ENCODE measurements at regions of chr15 and their contacts with region 1.

Region 1: DNA sequence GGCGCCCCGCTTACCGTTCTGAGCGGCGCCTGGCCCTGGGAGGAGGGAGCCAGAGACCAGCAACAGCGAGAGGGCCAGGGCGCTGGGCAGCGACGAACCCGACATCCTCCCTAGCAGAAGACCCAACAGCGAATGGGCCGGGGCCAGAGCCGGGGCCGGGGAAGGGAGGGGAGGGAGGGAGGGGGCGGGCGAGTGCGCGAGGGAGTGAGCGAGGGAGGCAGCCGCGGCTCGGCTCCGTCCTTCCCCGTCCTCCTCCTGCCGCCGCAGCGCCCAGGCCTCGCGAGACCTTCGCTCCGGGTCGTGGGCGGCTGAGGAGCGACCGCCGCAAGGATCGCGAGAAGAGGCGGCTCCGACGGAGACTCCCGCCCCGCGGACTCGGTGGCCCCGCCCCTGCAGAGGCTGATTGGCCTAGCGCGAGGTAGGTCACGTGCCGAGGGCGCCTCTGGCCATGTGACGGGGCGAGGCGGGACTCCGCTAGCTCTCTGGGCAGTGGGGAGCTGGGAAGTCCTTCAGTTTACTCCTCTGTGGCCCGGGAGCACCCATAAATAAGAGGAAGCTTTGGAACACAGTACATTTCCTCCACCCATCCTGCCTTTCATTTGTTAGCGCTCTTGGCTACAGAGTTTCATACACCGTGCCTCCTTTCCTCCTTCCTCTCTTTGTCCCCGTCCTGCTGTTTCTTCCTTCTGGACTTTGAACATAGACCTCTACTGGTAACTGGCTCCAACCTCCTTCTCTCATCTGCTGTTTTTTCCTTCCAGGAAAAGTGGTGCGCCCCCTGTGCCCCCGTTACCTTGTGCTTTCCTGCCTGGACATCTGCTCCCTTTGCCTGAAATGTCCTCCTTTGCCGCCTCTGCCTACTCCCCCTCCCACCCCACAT is at the start of gene NPTN:
- DNase-seq: peak; percentile 99
- H3K4me3 ChIP-seq: peak within 1 kb of the TSS; percentile 33 to 99 (median 67)
- H3K27ac ChIP-seq: peak within 1 kb of the TSS; percentile 89
- H3K4me1 ChIP-seq: peaks cover 31% of the 10 kb centered on the region
- H3K27me3 ChIP-seq: peaks cover 0 to 7% of the 10 kb centered on the region in 2 experiments
- CTCF ChIP-seq: no peak
- POLR2A ChIP-seq: peak; percentile 92
- total RNA-seq, gene NPTN: 71.5 and 77.4 TPM in 2 replicates

Region 2: DNA sequence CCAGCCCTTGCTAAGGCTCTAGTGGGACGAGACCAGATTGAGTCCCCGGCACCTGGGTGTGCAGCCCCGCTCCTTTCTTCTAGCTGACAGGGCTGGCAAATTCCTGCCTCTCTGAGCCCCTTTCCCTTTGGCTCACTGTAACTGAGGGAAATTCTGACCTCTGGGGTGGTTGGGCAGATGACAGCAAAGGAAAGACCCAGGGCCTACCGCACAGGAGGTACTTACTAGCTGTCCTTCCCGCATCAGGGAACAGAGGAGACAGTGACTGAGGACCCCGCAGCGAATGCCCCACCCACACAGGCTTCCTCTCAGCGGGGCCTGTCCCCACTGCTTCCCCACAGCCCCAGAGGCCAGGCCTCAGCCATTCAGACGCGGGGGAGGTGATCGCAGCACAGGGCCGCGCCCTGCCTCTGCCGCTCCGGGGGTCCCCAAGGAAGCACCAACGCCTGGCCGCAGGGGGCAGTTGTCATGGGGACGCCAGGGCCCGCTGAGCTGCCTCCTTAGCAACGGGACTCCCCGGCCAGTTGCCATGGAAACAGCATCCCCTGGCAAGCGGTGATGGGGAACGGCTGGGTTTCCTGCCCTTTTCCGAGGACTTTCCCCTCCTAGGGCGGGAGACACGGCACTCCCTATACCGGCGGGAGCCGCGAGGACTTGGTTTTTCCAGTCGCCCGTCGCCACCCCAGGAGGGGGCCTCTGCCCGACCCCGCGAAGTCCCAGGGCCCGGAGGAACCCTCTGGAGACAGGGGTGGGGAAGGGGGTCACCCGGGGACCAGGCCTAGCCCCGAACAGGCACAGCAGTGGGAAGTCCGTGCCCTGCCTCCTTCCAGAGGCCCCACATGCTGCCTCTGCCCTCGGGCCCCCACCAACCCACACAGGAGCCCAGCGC is 314.6 kb before region 1 on chr15:
- CTCF ChIA-PET with region 1: no interaction called
- POLR2A ChIA-PET with region 1: no interaction called
- dilution Hi-C with region 1: no loop called
- intact Hi-C with region 1: no loop called
- DNase-seq: no peak
- H3K4me3 ChIP-seq: no peak overlapping the region
- H3K27ac ChIP-seq: no peak overlapping the region
- H3K4me1 ChIP-seq: no peaks in the 10 kb centered on the region
- H3K27me3 ChIP-seq: peaks cover 0 to 2% of the 10 kb centered on the region in 2 experiments
- CTCF ChIP-seq: no peak
- POLR2A ChIP-seq: no peak

Region 3: GRCh38 chr15:73560501-73561117 is 72.7 kb before region 1 on chr15:
- CTCF ChIA-PET with region 1: interaction called, 294 read pairs
- POLR2A ChIA-PET with region 1: interaction called, 4 read pairs
- dilution Hi-C with region 1: no loop called
- intact Hi-C with region 1: loop called (anchors 1 kb)
- DNase-seq: peak; percentile 80
- H3K4me3 ChIP-seq: no peak overlapping the region
- H3K27ac ChIP-seq: no peak overlapping the region
- H3K4me1 ChIP-seq: peaks cover 10% of the 10 kb centered on the region
- H3K27me3 ChIP-seq: no peaks in the 10 kb centered on the region
- CTCF ChIP-seq: peak; percentile 10 to 36
- POLR2A ChIP-seq: no peak

Region 4: DNA sequence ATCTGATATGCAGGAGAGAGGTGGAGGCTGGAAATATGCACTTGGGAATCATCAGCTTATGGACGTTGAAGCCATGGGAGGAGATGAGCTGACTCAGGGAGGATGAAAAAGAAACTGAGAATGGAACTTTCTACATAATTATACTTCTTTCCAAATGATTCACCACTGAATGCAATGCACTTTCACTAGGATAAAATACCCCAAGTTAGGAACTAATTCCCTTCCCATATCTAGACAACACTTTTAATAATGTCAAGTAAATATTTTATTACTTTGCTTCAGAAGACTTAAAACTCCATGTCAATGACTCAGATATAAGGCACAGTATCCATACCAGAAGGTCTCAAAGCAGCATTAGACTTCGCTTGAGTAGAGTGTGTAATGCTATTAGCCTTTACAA is 24.4 kb before region 1 on chr15:
- CTCF ChIA-PET with region 1: interaction called, 16 read pairs
- POLR2A ChIA-PET with region 1: no interaction called
- dilution Hi-C with region 1: no loop called
- intact Hi-C with region 1: no loop called
- DNase-seq: no peak
- H3K4me3 ChIP-seq: no peak overlapping the region
- H3K27ac ChIP-seq: no peak overlapping the region
- H3K4me1 ChIP-seq: no peaks in the 10 kb centered on the region
- H3K27me3 ChIP-seq: no peaks in the 10 kb centered on the region
- CTCF ChIP-seq: no peak
- POLR2A ChIP-seq: no peak

Region 5: DNA sequence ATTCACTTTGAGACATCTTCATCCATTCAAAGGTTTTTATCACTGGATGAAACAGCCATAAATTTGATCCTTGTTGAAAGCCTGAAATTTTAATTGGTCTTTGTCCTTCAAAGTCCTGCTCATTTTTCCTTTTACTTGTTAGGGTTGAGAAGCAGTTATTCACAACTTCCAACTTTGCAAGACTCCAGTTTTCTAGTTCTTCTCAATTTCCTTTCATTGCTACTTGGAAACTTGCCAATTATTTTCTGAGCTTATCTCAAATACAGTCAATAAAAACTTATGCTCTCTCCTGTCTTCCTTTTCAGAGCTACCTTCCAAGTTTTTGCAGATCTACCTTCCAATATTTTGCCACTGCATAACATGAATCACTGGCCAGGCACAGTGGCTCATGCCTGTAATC is 27.1 kb after region 1 on chr15:
- CTCF ChIA-PET with region 1: interaction called, 15 read pairs
- POLR2A ChIA-PET with region 1: no interaction called
- dilution Hi-C with region 1: no loop called
- intact Hi-C with region 1: no loop called
- DNase-seq: no peak
- H3K4me3 ChIP-seq: no peak overlapping the region
- H3K27ac ChIP-seq: no peak overlapping the region
- H3K4me1 ChIP-seq: no peaks in the 10 kb centered on the region
- H3K27me3 ChIP-seq: peaks cover 6 to 7% of the 10 kb centered on the region in 2 experiments
- CTCF ChIP-seq: no peak
- POLR2A ChIP-seq: no peak

Region 6: GRCh38 chr15:73691396-73691795 is 58.0 kb after region 1 on chr15:
- CTCF ChIA-PET with region 1: interaction called, 207 read pairs
- POLR2A ChIA-PET with region 1: no interaction called
- dilution Hi-C with region 1: no loop called
- intact Hi-C with region 1: no loop called
- DNase-seq: peak; percentile 25
- H3K4me3 ChIP-seq: no peak overlapping the region
- H3K27ac ChIP-seq: no peak overlapping the region
- H3K4me1 ChIP-seq: peaks cover 41% of the 10 kb centered on the region
- H3K27me3 ChIP-seq: no peaks in the 10 kb centered on the region
- CTCF ChIP-seq: no peak
- POLR2A ChIP-seq: no peak

Region 7: DNA sequence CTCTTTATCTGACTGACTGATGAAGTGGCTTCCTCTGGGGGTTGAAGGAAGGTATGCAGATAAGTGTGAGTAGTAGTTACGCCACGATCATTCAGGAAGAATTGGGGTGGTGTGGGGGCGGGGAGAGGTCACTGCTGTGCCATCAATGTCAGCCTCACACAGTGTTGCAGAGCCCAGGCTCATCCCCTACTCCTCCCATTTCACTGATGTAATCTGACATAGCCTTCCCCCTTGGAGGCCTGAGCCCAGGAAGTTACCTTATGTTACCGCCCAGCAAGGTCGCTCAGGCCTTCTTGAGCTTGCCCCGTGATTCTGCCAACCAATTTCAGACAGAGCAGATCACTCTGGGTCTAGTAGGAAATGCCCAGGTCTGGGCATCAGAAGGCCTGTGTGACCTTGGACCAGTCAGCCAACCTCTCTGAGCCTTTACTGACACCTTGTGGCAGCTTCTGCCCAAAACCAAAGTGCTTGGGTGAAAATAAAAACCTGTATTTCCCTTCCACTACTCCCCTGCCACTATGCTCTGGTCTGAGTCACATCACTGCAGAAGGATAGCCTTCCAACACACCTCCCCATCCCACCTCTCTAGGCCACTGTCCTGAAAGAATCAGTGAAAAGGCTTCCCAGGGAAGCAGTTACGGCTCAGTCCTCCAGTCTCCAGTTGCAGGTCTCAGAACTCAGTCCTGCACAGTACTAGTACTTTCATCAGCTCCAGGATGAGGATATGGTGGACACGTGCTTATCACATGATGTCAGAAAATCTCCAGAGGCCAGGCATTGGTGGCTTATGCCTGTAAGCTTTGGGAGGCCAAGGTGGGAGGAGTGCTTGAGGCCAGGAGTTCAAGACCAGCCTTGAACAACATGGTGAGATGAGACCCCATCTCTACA is 147.9 kb after region 1 on chr15:
- CTCF ChIA-PET with region 1: interaction called, 6 read pairs
- POLR2A ChIA-PET with region 1: no interaction called
- dilution Hi-C with region 1: no loop called
- intact Hi-C with region 1: loop called (anchors 1 kb)
- DNase-seq: no peak
- H3K4me3 ChIP-seq: no peak overlapping the region
- H3K27ac ChIP-seq: no peak overlapping the region
- H3K4me1 ChIP-seq: no peaks in the 10 kb centered on the region
- H3K27me3 ChIP-seq: no peaks in the 10 kb centered on the region
- CTCF ChIP-seq: peak in 1 of 2 donors; percentile 12
- POLR2A ChIP-seq: no peak

Measured in endothelial cell of umbilical vein (primary cell).